ENCODE measurements at regions of chr19 and their contacts with region 1.

Region 1: DNA sequence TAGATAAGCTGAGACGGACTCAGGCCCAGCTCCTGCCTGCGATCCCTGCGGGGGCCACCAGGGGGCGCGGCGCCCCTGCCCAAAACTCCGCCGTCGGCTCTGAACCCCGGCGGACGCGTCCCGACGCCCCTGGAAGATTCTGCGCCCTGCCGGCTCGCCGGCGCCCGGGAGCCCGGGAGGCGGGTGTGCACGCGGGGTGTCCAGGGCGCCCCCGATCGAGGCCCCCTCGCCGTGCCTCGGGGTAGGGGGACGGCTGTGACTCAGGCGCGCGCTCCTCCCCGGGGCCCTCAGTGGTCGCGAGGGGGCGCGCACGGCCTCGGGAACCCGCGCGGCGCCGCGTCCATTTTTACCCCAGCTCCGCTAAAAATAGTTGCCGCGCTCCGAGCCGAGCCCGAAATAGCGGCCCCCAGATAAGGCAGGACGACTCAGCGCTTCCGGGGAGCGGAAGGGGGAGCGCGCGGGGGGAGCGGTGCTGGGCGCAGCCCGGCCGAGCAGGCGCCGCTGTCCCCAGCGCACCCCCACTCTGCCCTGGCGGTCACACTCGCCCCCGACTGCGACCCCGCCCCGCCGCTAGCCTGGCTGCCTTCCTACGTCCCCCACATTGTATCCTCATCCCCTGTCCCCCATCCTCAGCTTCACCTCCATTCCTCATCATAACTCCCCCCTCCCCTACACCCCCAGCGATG is 16.0 kb upstream of the ERCC1 start:
- DNase-seq: peak; percentile 92
- ATAC-seq: peak; percentile 72
- H3K4me3 Mint-ChIP-seq: peak overlapping the region; percentile 62
- H3K27ac Mint-ChIP-seq: peak overlapping the region; percentile 83
- H3K4me1 Mint-ChIP-seq: peaks cover 37% of the 10 kb centered on the region
- H3K27me3 Mint-ChIP-seq: peaks cover 2% of the 10 kb centered on the region

Region 2: DNA sequence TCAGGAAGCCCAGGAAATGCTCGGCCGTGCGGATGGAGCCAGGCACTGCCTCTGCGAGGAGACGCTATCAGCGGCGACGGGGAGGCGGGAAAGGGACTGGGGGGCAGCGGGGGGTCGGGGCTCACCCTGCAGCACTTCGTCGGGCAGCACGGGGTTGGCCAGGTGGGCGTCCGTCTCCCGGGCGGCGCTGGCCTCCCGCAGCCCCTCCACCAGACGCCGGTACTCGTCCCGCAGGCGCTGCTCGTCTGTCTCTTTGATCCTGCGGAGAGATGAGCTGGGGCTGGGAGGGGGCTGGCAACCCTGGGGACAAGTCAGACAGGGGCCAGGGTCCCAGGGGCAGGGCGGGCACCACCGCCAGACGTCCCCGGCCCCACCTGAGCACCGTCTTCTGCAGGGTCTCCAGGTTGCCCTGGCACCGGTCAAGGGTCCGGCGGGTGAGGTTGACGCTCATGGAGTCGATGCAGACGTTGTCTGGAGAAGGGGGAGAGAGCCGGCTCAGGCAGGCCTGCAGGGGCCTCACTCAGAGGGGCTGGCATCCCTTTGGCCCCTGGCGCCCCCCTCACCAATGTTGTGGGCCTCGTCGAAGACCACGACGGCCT is 75.8 kb before region 1 on chr19:
- CTCF ChIA-PET with region 1: no interaction called
- POLR2A ChIA-PET with region 1: no interaction called
- DNase-seq: no peak
- ATAC-seq: no peak
- H3K4me3 Mint-ChIP-seq: no peak overlapping the region
- H3K27ac Mint-ChIP-seq: no peak overlapping the region
- H3K4me1 Mint-ChIP-seq: peaks cover 5% of the 10 kb centered on the region
- H3K27me3 Mint-ChIP-seq: no peaks in the 10 kb centered on the region

Region 3: GRCh38 chr19:45405435-45406225 is 34.1 kb before region 1 on chr19:
- CTCF ChIA-PET with region 1: interaction called, 16 read pairs
- POLR2A ChIA-PET with region 1: interaction called, 3 read pairs
- DNase-seq: peak; percentile 90
- ATAC-seq: peak; percentile 59
- H3K4me3 Mint-ChIP-seq: peak overlapping the region; percentile 96
- H3K27ac Mint-ChIP-seq: peak overlapping the region; percentile 93
- H3K4me1 Mint-ChIP-seq: peaks cover 46% of the 10 kb centered on the region
- H3K27me3 Mint-ChIP-seq: peaks cover 21% of the 10 kb centered on the region

Region 4: GRCh38 chr19:45450012-45450333 is 10.3 kb after region 1 on chr19:
- CTCF ChIA-PET with region 1: interaction called, 26 read pairs
- POLR2A ChIA-PET with region 1: interaction called, 6 read pairs
- DNase-seq: no peak
- ATAC-seq: peak; percentile 41
- H3K4me3 Mint-ChIP-seq: peak overlapping the region; percentile 92
- H3K27ac Mint-ChIP-seq: peak overlapping the region; percentile 99
- H3K4me1 Mint-ChIP-seq: peaks cover 52% of the 10 kb centered on the region
- H3K27me3 Mint-ChIP-seq: peaks cover 6% of the 10 kb centered on the region

Region 5: DNA sequence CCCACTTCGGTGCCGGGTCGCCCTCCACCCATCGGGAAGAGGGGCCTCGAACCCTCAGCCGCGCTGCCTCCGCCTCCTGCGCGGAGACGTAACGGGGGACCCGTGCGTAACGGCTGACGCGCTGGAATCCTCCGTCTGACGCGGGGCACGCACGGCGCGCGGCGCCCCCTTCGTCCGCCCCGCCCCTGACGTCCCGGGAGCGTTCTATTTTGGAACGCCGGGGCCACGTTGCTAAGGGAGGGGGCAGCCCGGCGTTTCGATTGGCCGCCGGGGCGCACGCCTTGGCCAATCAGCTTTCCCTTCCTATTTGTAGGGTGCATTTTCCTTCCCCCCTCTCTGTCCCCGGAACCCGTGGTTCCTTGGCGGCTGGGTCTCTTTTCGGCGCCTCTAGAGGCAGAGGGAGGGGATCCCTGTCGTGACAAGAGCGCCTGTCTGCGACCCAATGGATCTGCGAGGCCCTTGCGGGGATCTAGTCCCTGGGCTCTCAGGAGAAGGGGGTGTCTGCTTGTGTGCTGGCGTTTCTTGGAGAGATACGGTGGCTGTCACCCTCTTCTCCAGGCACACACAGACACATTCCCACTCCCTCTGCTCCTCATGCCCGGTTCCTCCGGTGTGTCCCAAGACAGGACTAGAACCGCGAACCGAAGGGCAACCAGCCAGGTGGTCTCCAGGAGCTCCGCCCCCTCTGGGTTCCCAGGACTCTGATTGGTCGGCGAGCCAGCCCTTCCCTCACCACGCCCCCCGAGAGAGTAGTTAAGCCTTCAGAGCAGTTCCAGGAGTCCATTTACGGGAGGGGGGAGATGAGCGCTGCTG is 29.6 kb after region 1 on chr19:
- CTCF ChIA-PET with region 1: interaction called, 455 read pairs
- POLR2A ChIA-PET with region 1: interaction called, 16 read pairs
- DNase-seq: peak; percentile 96
- ATAC-seq: peak; percentile 28
- H3K4me3 Mint-ChIP-seq: peak overlapping the region; percentile 87
- H3K27ac Mint-ChIP-seq: peak overlapping the region; percentile 95
- H3K4me1 Mint-ChIP-seq: peaks cover 38% of the 10 kb centered on the region
- H3K27me3 Mint-ChIP-seq: peaks cover 37% of the 10 kb centered on the region

Region 6: DNA sequence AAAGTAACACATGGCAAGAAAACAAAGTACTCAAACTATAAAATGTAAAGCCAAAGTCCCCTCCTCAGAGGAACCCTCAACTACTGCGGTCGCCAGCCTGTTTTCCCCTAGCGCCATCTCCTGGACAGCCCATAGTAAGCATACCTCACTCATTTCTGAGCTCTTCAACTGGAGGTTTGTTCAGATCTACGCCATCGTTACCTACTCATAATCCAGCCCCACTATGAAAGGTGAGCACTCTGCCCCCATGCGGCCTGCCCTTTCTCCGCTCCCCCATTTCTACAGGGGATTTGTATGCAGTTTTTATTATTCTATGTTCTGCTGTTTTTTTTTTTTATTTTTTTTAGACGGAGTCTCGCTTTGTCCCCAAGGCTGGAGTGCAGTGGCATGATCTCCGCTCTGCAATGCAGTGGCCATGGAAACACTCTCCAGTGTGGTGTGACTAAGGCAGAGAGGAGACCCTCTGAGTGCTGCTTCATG is 118.7 kb after region 1 on chr19:
- CTCF ChIA-PET with region 1: interaction called, 13 read pairs
- POLR2A ChIA-PET with region 1: no interaction called
- DNase-seq: peak; percentile 82
- ATAC-seq: peak; percentile 98
- H3K4me3 Mint-ChIP-seq: no peak overlapping the region
- H3K27ac Mint-ChIP-seq: peak overlapping the region; percentile 62
- H3K4me1 Mint-ChIP-seq: peaks cover 28% of the 10 kb centered on the region
- H3K27me3 Mint-ChIP-seq: no peaks in the 10 kb centered on the region

Region 7: DNA sequence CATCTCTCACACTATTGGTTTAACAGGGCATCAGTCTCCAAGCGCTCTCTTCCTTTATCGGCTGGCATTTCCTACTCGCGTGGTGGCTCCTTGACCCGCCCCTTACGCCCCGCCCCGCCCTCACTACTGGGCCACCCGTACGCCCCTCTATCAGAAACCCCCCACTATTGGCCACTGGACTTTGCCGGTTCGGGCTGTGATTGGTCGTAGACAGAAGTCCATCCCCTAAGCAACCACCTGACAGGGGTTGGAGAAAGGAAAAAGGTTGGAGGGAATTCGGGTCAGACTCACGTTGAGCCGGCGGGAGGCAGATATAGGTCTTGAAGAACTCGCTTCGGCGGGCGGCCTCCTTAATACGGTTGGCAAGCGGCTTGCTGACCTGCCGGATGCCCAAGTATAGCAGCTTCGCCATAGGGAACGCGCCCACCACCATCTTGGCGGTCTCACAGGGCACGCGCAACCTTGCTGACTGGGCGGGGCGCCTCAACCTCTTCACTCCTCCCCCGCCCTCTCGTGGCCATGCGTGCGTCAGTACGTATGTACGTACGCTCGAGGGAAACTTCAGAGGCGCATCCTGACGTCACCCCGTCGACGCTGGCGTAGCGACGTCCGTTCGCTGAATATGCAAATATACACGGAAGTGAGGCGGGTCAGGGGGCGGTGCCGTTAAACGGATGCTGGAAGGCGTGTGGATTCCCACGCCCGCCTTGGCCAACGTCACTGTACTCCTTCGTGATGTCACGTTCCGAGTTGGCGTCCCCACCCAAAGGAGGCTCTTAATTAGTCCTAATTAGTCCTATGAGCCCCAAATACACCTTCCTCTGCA is 144.8 kb after region 1 on chr19 and contains the start of gene OPA3:
- CTCF ChIA-PET with region 1: no interaction called
- POLR2A ChIA-PET with region 1: no interaction called
- DNase-seq: peak; percentile 100
- ATAC-seq: peak; percentile 96
- H3K4me3 Mint-ChIP-seq: peak within 1 kb of the TSS; percentile 92
- H3K27ac Mint-ChIP-seq: peak within 1 kb of the TSS; percentile 97
- H3K4me1 Mint-ChIP-seq: peaks cover 15% of the 10 kb centered on the region
- H3K27me3 Mint-ChIP-seq: peaks cover 6% of the 10 kb centered on the region
- total RNA-seq, gene OPA3: 13.4 to 14.9 TPM

Measured in activated CD8-positive, alpha-beta T cell treated with anti-CD3 and anti-CD28 coated beads, Interleukin-2, amount 10 ng/mL, durations not matched to agents 7 days and 5 days (primary cell).